Mammary epithelial cell (primary cell): ENCODE measurements at regions of chr10 and their contacts with region 1.

Region 1: GRCh38 chr10:15097011-15097812 is at the start of gene RPP38:
- DNase-seq: peak; percentile 93
- H3K4me3 ChIP-seq: peak within 1 kb of the TSS; percentile 50 to 98 (median 81)
- H3K27ac ChIP-seq: peak within 1 kb of the TSS; percentile 92
- H3K4me1 ChIP-seq: peaks cover 16% of the 10 kb centered on the region
- H3K27me3 ChIP-seq: no peaks in the 10 kb centered on the region
- CTCF ChIP-seq: no peak
- total RNA-seq, gene RPP38: 13.0 to 21.7 TPM

Region 2: GRCh38 chr10:14878266-14879054 is 218.8 kb before region 1 on chr10 and contains the start of gene SUV39H2:
- CTCF ChIA-PET with region 1: no interaction called
- dilution Hi-C with region 1: no loop called
- in situ Hi-C with region 1: no loop called
- intact Hi-C with region 1: loop called (anchors 2 kb)
- DNase-seq: peak; percentile 93
- H3K4me3 ChIP-seq: peak within 1 kb of the TSS; percentile 77 to 96 (median 93)
- H3K27ac ChIP-seq: peak within 1 kb of the TSS; percentile 89
- H3K4me1 ChIP-seq: peaks cover 16% of the 10 kb centered on the region
- H3K27me3 ChIP-seq: no peaks in the 10 kb centered on the region
- CTCF ChIP-seq: peak in 1 of 2 donors; percentile 2
- total RNA-seq, gene SUV39H2: 8.5 to 17.2 TPM

Region 3: DNA sequence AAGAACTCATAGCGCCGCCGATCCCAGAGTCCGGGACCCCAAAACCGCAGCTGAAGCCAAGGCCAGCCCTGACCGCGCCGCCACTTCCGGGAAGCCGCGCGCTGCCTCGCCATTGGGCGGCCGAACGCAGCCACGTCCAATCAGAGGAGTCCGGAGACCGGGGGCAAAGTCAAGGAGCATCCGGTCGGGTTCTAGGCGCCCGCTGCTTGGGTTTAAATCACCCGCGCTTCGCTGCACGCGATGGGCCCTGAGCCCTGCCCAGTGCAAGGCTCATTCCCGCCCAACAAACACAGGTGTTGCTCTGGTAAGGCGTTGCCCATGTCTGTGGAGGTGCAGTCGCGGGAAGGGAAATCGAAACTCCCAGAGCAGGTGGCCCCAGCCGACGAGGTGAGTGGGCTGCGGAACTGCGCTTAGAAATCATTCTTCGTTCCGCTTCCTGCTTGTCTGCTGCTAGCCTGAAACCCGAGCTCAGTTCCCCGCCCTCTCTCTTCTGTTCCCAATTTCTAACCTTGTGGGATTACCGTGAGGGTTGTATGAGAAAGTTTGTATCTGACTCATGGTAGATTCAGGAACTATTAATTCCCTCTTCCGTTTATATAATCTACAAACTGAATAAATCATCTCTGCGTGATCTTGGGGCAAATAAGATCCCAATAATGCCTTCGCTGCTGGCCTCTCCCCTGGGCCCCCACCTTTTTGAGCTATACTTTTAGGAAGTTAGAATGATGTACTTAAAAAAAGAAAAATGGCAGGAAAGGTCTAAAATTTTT is 143.0 kb before region 1 on chr10 and contains the start of gene DCLRE1C:
- CTCF ChIA-PET with region 1: no interaction called
- dilution Hi-C with region 1: no loop called
- in situ Hi-C with region 1: no loop called
- intact Hi-C with region 1: loop called (anchors 1 kb)
- DNase-seq: peak; percentile 96
- H3K4me3 ChIP-seq: peak within 1 kb of the TSS; percentile 63 to 83 (median 70)
- H3K27ac ChIP-seq: peak within 1 kb of the TSS; percentile 86
- H3K4me1 ChIP-seq: peaks cover 16% of the 10 kb centered on the region
- H3K27me3 ChIP-seq: no peaks in the 10 kb centered on the region
- CTCF ChIP-seq: no peak
- total RNA-seq, gene DCLRE1C: 8.8 to 9.6 TPM

Region 4: DNA sequence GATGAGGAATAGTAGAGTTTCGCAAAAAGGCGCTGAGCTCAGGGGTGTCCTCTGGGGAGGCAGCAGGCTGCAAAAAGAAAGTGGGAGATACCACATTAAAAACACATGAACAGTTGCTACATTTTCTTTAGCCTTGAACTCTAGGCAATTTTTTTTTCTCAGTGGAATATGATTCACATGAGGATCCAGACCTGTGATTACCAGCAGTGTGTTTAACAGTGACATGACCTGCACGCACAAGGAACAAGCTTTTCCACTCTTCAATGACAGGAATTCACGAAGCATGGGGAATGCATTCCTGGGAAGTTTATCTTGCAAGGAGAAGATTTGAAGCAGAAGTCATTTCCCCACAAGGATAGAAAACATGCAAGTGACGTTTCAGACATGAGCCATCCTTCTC is 460.9 kb after region 1 on chr10:
- CTCF ChIA-PET with region 1: no interaction called
- dilution Hi-C with region 1: no loop called
- in situ Hi-C with region 1: no loop called
- intact Hi-C with region 1: no loop called
- DNase-seq: no peak
- H3K4me3 ChIP-seq: no peak overlapping the region
- H3K27ac ChIP-seq: no peak overlapping the region
- H3K4me1 ChIP-seq: no peaks in the 10 kb centered on the region
- H3K27me3 ChIP-seq: no peaks in the 10 kb centered on the region
- CTCF ChIP-seq: no peak